Cardiac septum (tissue), 1 donor: ENCODE measurements at regions of chr2 and their contacts with region 1.

Region 1: DNA sequence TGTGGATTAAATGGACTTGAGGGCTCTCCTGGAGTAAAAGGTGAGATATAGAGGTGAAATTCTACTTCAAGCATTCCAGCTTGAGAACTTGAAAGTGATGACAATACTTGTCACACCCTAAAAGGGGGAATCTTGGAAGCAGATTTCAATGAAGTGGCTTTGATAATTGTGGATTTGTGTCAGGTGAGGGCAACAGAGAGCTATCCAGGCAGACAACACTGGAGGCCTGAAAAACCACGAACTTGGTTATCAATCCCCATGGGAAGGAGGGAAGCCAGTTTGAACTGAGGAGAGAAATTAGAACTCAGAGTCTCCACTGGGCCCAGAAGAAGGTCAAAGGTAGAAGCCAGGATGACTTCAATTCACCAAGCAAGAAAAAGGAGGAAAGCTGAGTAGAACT is 263.9 kb downstream of the FIGN start:
- DNase-seq: no peak

Region 2: GRCh38 chr2:163551616-163552373 is 79.8 kb after region 1 on chr2:
- intact Hi-C with region 1: no loop called
- DNase-seq: no peak

Region 3: GRCh38 chr2:163757804-163758203 is 285.9 kb after region 1 on chr2:
- intact Hi-C with region 1: no loop called
- DNase-seq: no peak

Region 4: DNA sequence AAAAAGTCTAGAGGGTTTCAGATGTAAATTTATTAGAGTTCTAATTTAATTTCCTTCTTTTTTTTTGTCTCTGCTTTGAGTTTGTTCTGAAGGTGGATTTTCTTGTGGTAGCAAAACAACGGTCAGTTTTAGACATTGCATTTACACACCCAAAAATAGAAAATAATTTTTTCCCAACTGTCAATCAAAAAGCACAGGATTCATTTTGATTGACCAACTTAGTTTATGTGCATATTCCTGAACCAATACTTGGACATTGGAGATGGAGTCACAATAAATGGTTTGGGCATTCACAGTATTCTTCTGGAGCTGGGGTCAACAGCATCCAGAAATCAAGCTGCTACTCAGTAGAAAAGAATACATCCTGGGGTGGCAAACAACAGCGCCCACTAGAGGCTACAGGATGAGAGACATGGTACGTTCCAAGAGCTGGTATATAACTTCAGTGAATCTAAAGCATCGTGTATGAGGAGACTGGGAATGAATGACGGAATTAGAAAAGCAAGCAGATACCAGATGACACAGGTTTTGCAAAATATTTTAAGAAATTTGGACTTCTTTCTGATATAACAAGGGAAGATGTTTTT is 406.7 kb after region 1 on chr2:
- intact Hi-C with region 1: loop called (anchors 10 kb)
- DNase-seq: no peak